CD4-positive, alpha-beta memory T cell (primary cell): ENCODE measurements at regions of chr6 and their contacts with region 1.

Region 1: GRCh38 chr6:109073344-109074132 is 21.1 kb downstream of the SESN1 start:
- DNase-seq: peak; percentile 67 to 74 (median 71)
- H3K4me3 ChIP-seq: no peak overlapping the region
- H3K4me3 Mint-ChIP-seq: peak overlapping the region in 6 of 8 donors; percentile 20 to 71 (median 51)
- H3K27ac ChIP-seq: no peak overlapping the region
- H3K27ac Mint-ChIP-seq: peak overlapping the region in 4 of 7 donors; percentile 1 to 72 (median 34)
- H3K4me1 ChIP-seq: peaks cover 34% of the 10 kb centered on the region
- H3K4me1 Mint-ChIP-seq: peaks cover 24 to 39% (median 34%) of the 10 kb centered on the region in 4 donors
- H3K27me3 ChIP-seq: no peaks in the 10 kb centered on the region
- H3K27me3 Mint-ChIP-seq: no peaks in the 10 kb centered on the region

Region 2: DNA sequence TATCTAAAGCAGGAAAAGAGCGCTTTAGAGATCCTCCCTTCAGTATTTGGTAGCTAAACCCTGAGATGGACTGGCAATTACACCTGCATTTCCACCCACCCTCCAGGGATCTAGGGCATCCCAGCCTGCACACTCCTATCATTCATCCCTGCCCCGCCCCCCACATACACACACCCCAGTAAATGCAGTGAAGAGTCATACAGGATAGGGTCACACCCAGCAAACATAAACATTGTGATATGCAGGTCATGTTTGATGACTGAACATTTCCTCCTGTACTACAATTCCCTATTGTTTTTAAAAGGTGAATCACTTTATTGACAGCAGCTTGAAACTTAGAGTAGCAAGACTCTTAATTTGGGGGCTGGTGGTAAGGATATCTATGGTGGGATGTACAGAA is 399.9 kb before region 1 on chr6:
- CTCF ChIA-PET with region 1: no interaction called
- POLR2A ChIA-PET with region 1: no interaction called
- intact Hi-C with region 1: loop called (anchors 10 kb)
- DNase-seq: no peak
- H3K4me3 ChIP-seq: no peak overlapping the region
- H3K4me3 Mint-ChIP-seq: no peak overlapping the region
- H3K27ac ChIP-seq: no peak overlapping the region
- H3K27ac Mint-ChIP-seq: peak overlapping the region in 1 of 7 donors; percentile 77
- H3K4me1 ChIP-seq: peaks cover 6% of the 10 kb centered on the region
- H3K4me1 Mint-ChIP-seq: peaks cover 17 to 77% (median 39%) of the 10 kb centered on the region in 4 donors
- H3K27me3 ChIP-seq: no peaks in the 10 kb centered on the region
- H3K27me3 Mint-ChIP-seq: no peaks in the 10 kb centered on the region

Region 3: GRCh38 chr6:108848116-108848868 is 225.2 kb before region 1 on chr6 and contains the start of gene ARMC2:
- CTCF ChIA-PET with region 1: interaction called, 11 read pairs
- POLR2A ChIA-PET with region 1: interaction called, 4 read pairs
- intact Hi-C with region 1: no loop called
- DNase-seq: peak; percentile 85 to 88 (median 86)
- H3K4me3 ChIP-seq: peak within 1 kb of the TSS; percentile 46 to 78
- H3K4me3 Mint-ChIP-seq: peak within 1 kb of the TSS; percentile 84 to 91 (median 86)
- H3K27ac ChIP-seq: peak within 1 kb of the TSS; percentile 58
- H3K27ac Mint-ChIP-seq: peak within 1 kb of the TSS; percentile 81 to 93 (median 91)
- H3K4me1 ChIP-seq: peaks cover 15% of the 10 kb centered on the region
- H3K4me1 Mint-ChIP-seq: peaks cover 17 to 33% (median 23%) of the 10 kb centered on the region in 4 donors
- H3K27me3 ChIP-seq: no peaks in the 10 kb centered on the region
- H3K27me3 Mint-ChIP-seq: no peaks in the 10 kb centered on the region
- total RNA-seq, gene ARMC2: 10.7 to 11.2 TPM

Region 4: DNA sequence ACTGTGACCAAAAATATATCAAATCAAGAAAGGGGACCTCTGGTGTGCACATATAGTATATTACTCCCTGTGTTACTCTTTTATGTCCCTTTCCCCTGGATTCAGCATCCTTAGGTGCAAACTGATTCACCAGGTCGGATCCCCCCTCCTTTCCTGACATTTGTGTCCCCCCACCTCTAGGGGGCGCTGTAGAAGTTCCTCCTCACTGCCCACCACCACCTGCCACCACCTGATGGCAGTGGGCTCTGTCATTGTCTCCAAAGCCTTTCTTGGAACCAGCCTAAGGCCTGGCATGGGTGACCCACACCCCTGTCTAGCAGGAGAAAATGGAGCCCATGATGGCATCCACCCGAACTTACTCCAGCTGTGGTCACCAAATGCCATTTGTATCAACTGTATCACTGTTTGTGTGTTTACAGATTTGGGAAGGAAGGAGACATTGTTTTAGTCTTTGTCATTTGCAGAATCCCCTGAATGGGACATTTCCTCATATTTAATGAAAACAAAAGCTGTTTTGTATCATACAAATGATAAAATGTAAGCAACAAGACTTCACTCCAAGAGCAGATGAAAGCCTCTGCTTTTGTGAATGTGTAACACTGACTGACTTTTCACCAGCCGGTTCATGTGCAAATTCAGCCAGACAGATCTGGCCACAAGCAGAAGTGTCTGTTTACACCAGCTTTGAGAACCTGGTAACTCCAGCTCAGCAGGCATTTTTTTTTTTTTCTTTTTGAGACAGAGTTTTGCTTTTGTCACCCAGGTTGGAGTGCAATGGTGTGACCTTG is 159.1 kb before region 1 on chr6:
- CTCF ChIA-PET with region 1: interaction called, 52 read pairs
- POLR2A ChIA-PET with region 1: no interaction called
- intact Hi-C with region 1: loop called (anchors 1 kb)
- DNase-seq: peak in 3 of 5 donors; percentile 21 to 45 (median 36)
- H3K4me3 ChIP-seq: no peak overlapping the region
- H3K4me3 Mint-ChIP-seq: no peak overlapping the region
- H3K27ac ChIP-seq: no peak overlapping the region
- H3K27ac Mint-ChIP-seq: peak overlapping the region in 1 of 7 donors; percentile 20
- H3K4me1 ChIP-seq: no peaks in the 10 kb centered on the region
- H3K4me1 Mint-ChIP-seq: peaks cover 0 to 6% (median 2%) of the 10 kb centered on the region in 4 donors
- H3K27me3 ChIP-seq: no peaks in the 10 kb centered on the region
- H3K27me3 Mint-ChIP-seq: no peaks in the 10 kb centered on the region

Region 5: GRCh38 chr6:109009236-109009961 is 64.1 kb before region 1 on chr6:
- CTCF ChIA-PET with region 1: interaction called, 61 read pairs
- POLR2A ChIA-PET with region 1: interaction called, 58 read pairs
- intact Hi-C with region 1: loop called (anchors 1 kb)
- DNase-seq: peak; percentile 90 to 92 (median 90)
- H3K4me3 ChIP-seq: peak overlapping the region; percentile 77 to 86
- H3K4me3 Mint-ChIP-seq: peak overlapping the region; percentile 94 to 100 (median 98)
- H3K27ac ChIP-seq: peak overlapping the region; percentile 96
- H3K27ac Mint-ChIP-seq: peak overlapping the region; percentile 94 to 100 (median 100)
- H3K4me1 ChIP-seq: peaks cover 67% of the 10 kb centered on the region
- H3K4me1 Mint-ChIP-seq: peaks cover 47 to 81% (median 60%) of the 10 kb centered on the region in 4 donors
- H3K27me3 ChIP-seq: no peaks in the 10 kb centered on the region
- H3K27me3 Mint-ChIP-seq: no peaks in the 10 kb centered on the region

Region 6: DNA sequence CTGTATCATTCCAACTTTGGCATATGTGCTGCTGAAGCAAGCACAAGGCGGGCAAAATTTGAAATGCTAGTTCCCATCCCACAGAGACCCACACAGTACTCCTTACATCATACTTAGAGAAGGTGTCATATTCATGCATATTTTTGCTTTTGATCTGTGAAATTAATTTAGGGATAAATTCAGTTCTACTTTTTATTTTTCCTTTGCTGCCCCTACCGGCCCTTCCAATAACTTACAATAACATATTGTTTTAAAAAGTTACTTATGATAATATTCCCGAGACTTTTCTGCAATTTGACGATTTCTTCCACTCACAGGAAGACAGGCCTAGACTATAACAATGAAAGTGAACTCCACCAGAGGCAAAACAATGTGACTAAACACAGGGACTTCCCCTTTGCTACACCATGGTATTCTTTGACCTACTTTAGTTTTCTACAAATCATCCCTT is 13.9 kb before region 1 on chr6:
- CTCF ChIA-PET with region 1: interaction called, 29 read pairs
- POLR2A ChIA-PET with region 1: interaction called, 32 read pairs
- intact Hi-C with region 1: no loop called
- DNase-seq: peak; percentile 52 to 65 (median 58)
- H3K4me3 ChIP-seq: no peak overlapping the region
- H3K4me3 Mint-ChIP-seq: peak overlapping the region in 7 of 8 donors; percentile 35 to 78 (median 61)
- H3K27ac ChIP-seq: peak overlapping the region; percentile 52
- H3K27ac Mint-ChIP-seq: peak overlapping the region; percentile 71 to 95 (median 92)
- H3K4me1 ChIP-seq: peaks cover 36% of the 10 kb centered on the region
- H3K4me1 Mint-ChIP-seq: peaks cover 31 to 59% (median 39%) of the 10 kb centered on the region in 4 donors
- H3K27me3 ChIP-seq: no peaks in the 10 kb centered on the region
- H3K27me3 Mint-ChIP-seq: no peaks in the 10 kb centered on the region

Region 7: DNA sequence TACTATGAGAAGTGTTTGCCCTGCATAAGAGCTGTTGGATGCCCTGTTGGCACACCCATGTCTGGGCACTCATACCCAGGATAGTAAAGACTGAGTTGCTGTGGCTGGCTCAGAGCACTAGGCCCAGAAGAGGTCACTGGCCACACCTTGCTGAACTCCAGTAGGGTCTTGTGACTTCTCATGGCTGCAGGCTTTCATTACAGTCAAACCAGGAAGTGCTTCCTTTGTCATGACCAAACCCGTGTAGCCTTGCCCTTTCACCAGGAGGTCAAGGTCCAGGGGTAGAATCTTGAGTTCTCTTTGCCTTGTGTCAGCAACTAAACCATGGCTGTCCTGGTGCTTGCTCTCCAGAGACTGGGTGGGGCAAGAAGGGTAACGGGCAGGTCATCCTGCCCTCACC is 259.2 kb after region 1 on chr6:
- CTCF ChIA-PET with region 1: no interaction called
- POLR2A ChIA-PET with region 1: no interaction called
- intact Hi-C with region 1: no loop called
- DNase-seq: no peak
- H3K4me3 ChIP-seq: no peak overlapping the region
- H3K4me3 Mint-ChIP-seq: no peak overlapping the region
- H3K27ac ChIP-seq: no peak overlapping the region
- H3K27ac Mint-ChIP-seq: peak overlapping the region in 1 of 7 donors; percentile 26
- H3K4me1 ChIP-seq: no peaks in the 10 kb centered on the region
- H3K4me1 Mint-ChIP-seq: peaks cover 0 to 5% (median 3%) of the 10 kb centered on the region in 4 donors
- H3K27me3 ChIP-seq: no peaks in the 10 kb centered on the region
- H3K27me3 Mint-ChIP-seq: no peaks in the 10 kb centered on the region